ENCODE measurements at regions of chr7 and their contacts with region 1.

Region 1: GRCh38 chr7:129298268-129298893 is 73.6 kb downstream of the AHCYL2 start:
- DNase-seq: peak in 1 of 2 donors; percentile 71
- ATAC-seq: no peak

Region 2: GRCh38 chr7:128909625-128910257 is 388.6 kb before region 1 on chr7:
- intact Hi-C with region 1: no loop called
- DNase-seq: peak in 1 of 2 donors; percentile 22
- ATAC-seq: no peak

Region 3: DNA sequence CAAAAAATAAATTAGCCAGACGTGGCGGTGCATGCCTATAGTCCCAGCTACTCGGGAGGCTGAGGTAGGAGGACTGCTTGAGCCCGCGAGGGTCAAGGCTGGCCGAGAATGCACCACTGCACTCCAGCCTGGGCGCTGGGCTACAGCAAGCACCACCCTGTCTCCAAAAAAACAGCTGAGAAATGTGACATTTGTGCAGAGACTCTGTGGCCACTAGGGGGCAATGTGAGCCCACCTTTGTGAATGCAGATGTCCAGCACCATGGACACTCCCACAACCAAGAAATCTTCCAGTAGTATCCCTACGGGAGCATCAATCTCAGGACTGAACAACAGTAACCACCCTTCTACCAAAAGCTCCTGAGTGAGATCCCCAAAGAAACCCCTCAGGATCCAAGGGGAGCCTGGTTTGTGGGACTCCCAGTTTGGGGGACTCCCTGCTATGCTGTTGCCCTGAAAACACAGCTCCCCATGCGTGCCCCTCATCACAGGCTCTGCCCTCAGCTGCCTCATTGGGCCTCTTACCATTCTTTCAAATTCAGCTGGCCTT is 79.8 kb before region 1 on chr7:
- intact Hi-C with region 1: loop called in 1 of 2 experiments (anchors 5 kb)
- DNase-seq: peak; percentile 72 to 93
- ATAC-seq: peak; percentile 96

Measured in left colon (tissue), 2 donors.